ENCODE measurements at regions of chr4 and their contacts with region 1.

Region 1: DNA sequence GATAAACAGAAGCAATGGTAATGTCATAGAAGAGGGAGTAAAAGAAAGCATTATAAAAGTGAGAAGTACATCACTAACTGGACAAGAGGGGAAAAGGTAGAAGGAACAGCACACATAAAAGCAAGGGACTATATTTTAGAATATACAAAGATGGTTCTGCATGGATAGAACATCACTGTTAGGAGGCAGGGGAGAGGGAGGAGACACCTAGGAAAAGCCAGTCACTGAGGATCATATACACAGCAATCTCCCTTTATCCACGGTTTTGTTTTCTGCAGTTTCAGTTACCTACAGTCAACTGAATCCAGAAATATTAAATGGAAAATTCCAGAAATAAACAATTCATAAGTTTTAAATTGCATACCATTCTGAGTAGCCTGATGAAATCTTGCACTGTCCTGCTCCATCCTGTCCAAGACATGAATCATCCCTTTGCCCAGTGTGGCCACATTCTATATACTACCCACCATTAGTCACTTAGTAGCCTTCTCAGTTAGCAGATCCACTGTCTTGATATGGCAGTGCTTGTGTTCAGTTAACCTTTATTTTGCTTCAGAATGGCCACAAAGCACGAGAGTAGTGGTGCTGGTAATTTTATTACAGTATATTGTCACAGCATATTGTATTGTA is 74.2 kb downstream of the PPA2 start:
- DNase-seq: no peak
- ATAC-seq: no peak
- H3K4me3 ChIP-seq: no peak overlapping the region
- H3K27ac ChIP-seq: no peak overlapping the region
- H3K4me1 ChIP-seq: no peaks in the 10 kb centered on the region
- H3K27me3 ChIP-seq: no peaks in the 10 kb centered on the region
- CTCF ChIP-seq: no peak
- POLR2A ChIP-seq: no peak

Region 2: GRCh38 chr4:105022811-105023667 is 376.6 kb before region 1 on chr4:
- intact Hi-C with region 1: no loop called
- DNase-seq: peak in 1 of 5 donors; percentile 10
- ATAC-seq: no peak
- H3K4me3 ChIP-seq: no peak overlapping the region
- H3K27ac ChIP-seq: no peak overlapping the region
- H3K4me1 ChIP-seq: peaks cover 0 to 4% (median 0%) of the 10 kb centered on the region in 12 donors
- H3K27me3 ChIP-seq: no peaks in the 10 kb centered on the region
- CTCF ChIP-seq: no peak
- POLR2A ChIP-seq: no peak

Region 3: GRCh38 chr4:105453550-105454205 is 54.0 kb after region 1 on chr4:
- intact Hi-C with region 1: loop called in 1 of 10 experiments (anchors 10 kb)
- DNase-seq: no peak
- ATAC-seq: no peak
- H3K4me3 ChIP-seq: no peak overlapping the region
- H3K27ac ChIP-seq: no peak overlapping the region
- H3K4me1 ChIP-seq: peaks cover 0 to 28% (median 11%) of the 10 kb centered on the region in 12 donors
- H3K27me3 ChIP-seq: no peaks in the 10 kb centered on the region
- CTCF ChIP-seq: no peak
- POLR2A ChIP-seq: no peak

Region 4: GRCh38 chr4:105594099-105594993 is 194.7 kb after region 1 on chr4:
- intact Hi-C with region 1: no loop called
- DNase-seq: no peak
- ATAC-seq: no peak
- H3K4me3 ChIP-seq: no peak overlapping the region
- H3K27ac ChIP-seq: no peak overlapping the region
- H3K4me1 ChIP-seq: peaks cover 0 to 10% (median 0%) of the 10 kb centered on the region in 12 donors
- H3K27me3 ChIP-seq: no peaks in the 10 kb centered on the region
- CTCF ChIP-seq: no peak
- POLR2A ChIP-seq: no peak